HCT116 (cell line): ENCODE measurements at regions of chr11 and their contacts with region 1.

Region 1: DNA sequence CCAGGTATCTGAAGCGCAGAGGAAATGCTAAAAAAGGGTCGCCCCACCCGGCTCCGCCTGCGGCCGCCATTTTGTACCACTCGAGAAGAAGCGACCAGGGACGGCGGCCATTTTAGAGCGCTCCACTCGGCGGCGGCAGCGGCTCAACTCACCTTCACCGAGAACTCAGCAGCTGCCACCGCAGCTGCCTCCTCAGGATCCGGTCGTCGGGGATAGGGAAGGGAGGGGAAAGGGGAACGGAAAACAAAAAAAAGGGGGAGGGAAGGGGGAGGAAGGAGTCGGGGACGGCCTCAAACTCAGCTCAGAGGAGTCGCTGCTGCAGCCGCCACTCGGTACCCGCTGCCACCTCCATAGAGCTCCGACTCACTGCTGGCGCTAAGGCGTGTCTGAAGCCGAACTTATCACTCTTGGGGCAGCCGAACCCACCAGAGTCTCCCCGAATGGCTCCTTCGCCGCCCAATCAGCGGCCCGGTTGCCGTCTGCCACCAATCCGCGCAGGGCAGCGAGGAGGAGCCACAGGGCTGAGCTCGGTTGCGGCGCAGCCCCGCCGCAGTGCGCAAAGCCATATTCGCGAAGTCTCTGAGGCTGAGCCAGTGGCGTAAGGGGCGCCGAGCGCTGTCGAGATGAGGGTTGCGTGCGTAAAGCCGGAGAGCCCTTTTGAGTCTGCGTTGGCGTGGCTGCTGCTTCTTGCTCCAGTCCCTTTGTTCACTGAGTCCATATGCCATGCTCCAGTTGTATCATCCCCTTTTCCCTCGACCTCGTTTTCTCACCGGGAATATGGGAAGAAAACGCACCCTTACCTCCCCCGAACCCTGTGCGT is at the start of gene EIF4G2:
- DNase-seq: peak; percentile 95
- ATAC-seq: peak; percentile 94
- H3K4me3 ChIP-seq: peak within 1 kb of the TSS; percentile 89 to 97
- H3K27ac ChIP-seq: peak within 1 kb of the TSS; percentile 100
- H3K4me1 ChIP-seq: peaks cover 10 to 24% of the 10 kb centered on the region in 2 experiments
- H3K27me3 ChIP-seq: no peaks in the 10 kb centered on the region
- CTCF ChIP-seq: no peak
- POLR2A ChIP-seq: peak; percentile 99
- RAD21 ChIP-seq: no peak
- total RNA-seq, gene EIF4G2: 888 TPM

Region 2: GRCh38 chr11:10797531-10797930 is 11.2 kb before region 1 on chr11:
- CTCF ChIA-PET with region 1: interaction called, 15 read pairs
- POLR2A ChIA-PET with region 1: interaction called, 19 read pairs
- RAD21 ChIA-PET with region 1: no interaction called
- intact Hi-C with region 1: no loop called
- DNase-seq: no peak
- ATAC-seq: no peak
- H3K4me3 ChIP-seq: no peak overlapping the region
- H3K27ac ChIP-seq: no peak overlapping the region
- H3K4me1 ChIP-seq: peaks cover 0 to 4% of the 10 kb centered on the region in 2 experiments; a peak in 3 of 4 replicates
- H3K27me3 ChIP-seq: no peaks in the 10 kb centered on the region
- CTCF ChIP-seq: no peak
- POLR2A ChIP-seq: no peak
- RAD21 ChIP-seq: no peak

Region 3: DNA sequence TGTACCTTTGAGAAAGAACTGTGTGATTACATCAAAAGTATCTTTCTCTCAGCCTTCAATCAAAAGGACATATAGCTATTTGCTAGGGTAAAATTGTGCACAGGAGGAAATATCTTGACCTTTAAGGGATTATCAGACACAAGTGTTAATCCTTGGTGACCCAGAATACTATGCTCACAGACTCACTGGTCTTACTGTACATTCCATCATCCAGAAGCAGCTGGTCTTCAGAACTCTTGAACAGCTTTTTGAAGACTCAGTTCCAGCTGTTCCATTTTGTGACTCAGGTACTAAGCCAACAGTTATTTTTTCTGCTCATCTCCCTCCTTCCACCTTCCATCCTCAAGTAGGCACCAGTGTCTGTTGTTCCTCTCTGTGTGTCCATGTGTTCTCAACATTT is 29.3 kb after region 1 on chr11:
- CTCF ChIA-PET with region 1: no interaction called
- POLR2A ChIA-PET with region 1: interaction called, 21 read pairs
- RAD21 ChIA-PET with region 1: no interaction called
- intact Hi-C with region 1: no loop called
- DNase-seq: no peak
- ATAC-seq: no peak
- H3K4me3 ChIP-seq: no peak overlapping the region
- H3K27ac ChIP-seq: no peak overlapping the region
- H3K4me1 ChIP-seq: peaks cover 0 to 5% of the 10 kb centered on the region in 2 experiments; a peak in 1 of 4 replicates
- H3K27me3 ChIP-seq: no peaks in the 10 kb centered on the region
- CTCF ChIP-seq: no peak
- POLR2A ChIP-seq: no peak
- RAD21 ChIP-seq: no peak

Region 4: GRCh38 chr11:10847960-10848870 is 39.5 kb after region 1 on chr11:
- CTCF ChIA-PET with region 1: no interaction called
- POLR2A ChIA-PET with region 1: interaction called, 11 read pairs
- RAD21 ChIA-PET with region 1: no interaction called
- intact Hi-C with region 1: no loop called
- DNase-seq: no peak
- ATAC-seq: no peak
- H3K4me3 ChIP-seq: no peak overlapping the region
- H3K27ac ChIP-seq: no peak overlapping the region
- H3K4me1 ChIP-seq: no peaks in the 10 kb centered on the region
- H3K27me3 ChIP-seq: no peaks in the 10 kb centered on the region
- CTCF ChIP-seq: no peak
- POLR2A ChIP-seq: no peak
- RAD21 ChIP-seq: no peak

Region 5: DNA sequence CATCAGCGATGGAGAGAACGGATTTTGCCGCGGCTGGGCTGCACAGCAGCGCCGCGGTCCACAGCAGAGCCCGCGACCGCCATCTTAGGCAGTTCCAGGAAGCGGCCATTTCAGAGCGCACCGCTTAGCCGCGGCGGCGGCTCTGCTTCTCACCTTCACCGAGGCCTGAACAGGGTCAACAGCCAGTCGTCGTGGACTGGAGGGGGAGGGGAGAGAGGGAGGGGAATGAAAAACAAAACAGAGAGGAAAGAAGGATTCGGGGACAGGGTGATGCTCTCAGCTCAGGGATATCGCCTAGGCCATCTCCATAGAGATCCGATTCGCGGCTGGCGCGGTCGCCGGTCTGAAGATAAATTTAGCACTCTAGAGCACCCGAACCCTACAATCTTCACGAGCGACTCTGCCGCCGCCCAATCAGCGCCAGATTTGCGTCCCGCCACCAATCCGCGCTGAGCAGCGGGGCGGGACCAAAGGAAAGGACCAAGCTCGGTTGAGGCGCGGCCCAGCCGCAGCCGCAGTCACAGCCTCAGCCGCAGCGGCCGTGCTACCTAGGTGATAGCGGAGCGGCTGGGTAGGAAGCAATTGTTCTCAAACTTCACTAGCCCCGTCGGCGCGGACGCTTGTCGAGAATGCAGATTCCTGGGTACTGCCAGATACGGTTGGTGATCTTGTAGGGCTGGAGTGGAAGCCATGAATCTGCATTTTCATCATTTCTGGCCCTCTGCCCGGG is 49.1 kb after region 1 on chr11 and contains the start of gene ZBED5:
- CTCF ChIA-PET with region 1: interaction called, 5 read pairs
- POLR2A ChIA-PET with region 1: interaction called, 22 read pairs
- RAD21 ChIA-PET with region 1: no interaction called
- intact Hi-C with region 1: loop called (anchors 1 kb)
- DNase-seq: peak; percentile 94
- ATAC-seq: peak; percentile 92
- H3K4me3 ChIP-seq: peak within 1 kb of the TSS; percentile 86 to 91
- H3K27ac ChIP-seq: peak within 1 kb of the TSS; percentile 91
- H3K4me1 ChIP-seq: peaks cover 0 to 21% of the 10 kb centered on the region in 2 experiments; a peak in 2 of 4 replicates
- H3K27me3 ChIP-seq: no peaks in the 10 kb centered on the region
- CTCF ChIP-seq: no peak
- POLR2A ChIP-seq: peak; percentile 84
- RAD21 ChIP-seq: peak; percentile 31; the same call in 1 of the 2 replicates
- total RNA-seq, gene ZBED5: 26.8 TPM

Region 6: GRCh38 chr11:10899121-10899830 is 90.5 kb after region 1 on chr11:
- CTCF ChIA-PET with region 1: interaction called, 4 read pairs
- POLR2A ChIA-PET with region 1: interaction called, 48 read pairs
- RAD21 ChIA-PET with region 1: no interaction called
- intact Hi-C with region 1: loop called (anchors 5 kb)
- DNase-seq: no peak
- ATAC-seq: peak; percentile 73
- H3K4me3 ChIP-seq: peak overlapping the region; percentile 7 to 40; a peak in 3 of 4 replicates
- H3K27ac ChIP-seq: peak overlapping the region; percentile 93
- H3K4me1 ChIP-seq: peaks cover 34 to 45% of the 10 kb centered on the region in 2 experiments
- H3K27me3 ChIP-seq: no peaks in the 10 kb centered on the region
- CTCF ChIP-seq: no peak
- POLR2A ChIP-seq: peak; percentile 21
- RAD21 ChIP-seq: no peak